GM10248 (cell line): ENCODE measurements at regions of chr1 and their contacts with region 1.

Region 1: GRCh38 chr1:226121587-226122400 is 59.3 kb downstream of the H3-3A start:
- DNase-seq: peak; percentile 88
- CTCF ChIP-seq: peak; percentile 87

Region 2: DNA sequence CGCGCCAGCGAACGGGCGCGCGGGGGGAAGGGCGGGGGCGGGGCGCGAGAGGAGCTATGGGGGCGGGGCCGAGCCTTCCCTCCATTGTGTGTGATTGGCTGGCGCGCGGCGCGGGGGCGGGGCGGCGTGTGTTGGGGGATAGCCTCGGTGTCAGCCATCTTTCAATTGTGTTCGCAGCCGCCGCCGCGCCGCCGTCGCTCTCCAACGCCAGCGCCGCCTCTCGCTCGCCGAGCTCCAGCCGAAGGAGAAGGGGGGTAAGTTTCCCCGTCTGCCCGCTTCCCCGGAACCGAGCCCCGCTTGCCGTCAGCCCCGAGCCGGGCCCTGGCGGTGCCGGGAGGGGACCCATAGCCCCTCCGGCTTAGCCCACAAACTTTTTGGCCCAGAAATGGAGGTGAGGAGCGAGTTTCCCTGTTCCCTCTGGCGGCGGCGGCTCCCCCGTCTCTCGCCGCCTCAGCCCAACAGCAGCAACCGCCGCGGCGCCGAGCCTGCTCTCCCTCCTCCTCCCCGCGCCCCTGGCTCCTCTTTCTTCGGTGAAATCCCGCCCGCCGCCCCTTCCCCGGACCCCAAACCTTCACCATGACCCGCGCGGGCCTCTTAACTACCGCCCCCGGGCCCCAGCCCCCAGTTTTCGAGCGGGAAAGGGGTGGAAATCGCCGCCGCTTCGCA is 59.1 kb before region 1 on chr1 and contains the start of gene H3-3A:
- CTCF ChIA-PET with region 1: interaction called, 36 read pairs
- POLR2A ChIA-PET with region 1: interaction called, 5 read pairs
- DNase-seq: peak; percentile 97
- CTCF ChIP-seq: no peak

Region 3: GRCh38 chr1:226109829-226110248 is 12.0 kb before region 1 on chr1:
- CTCF ChIA-PET with region 1: interaction called, 78 read pairs
- POLR2A ChIA-PET with region 1: no interaction called
- DNase-seq: peak; percentile 96
- CTCF ChIP-seq: no peak

Region 4: GRCh38 chr1:226158457-226158856 is 36.7 kb after region 1 on chr1:
- CTCF ChIA-PET with region 1: interaction called, 40 read pairs
- POLR2A ChIA-PET with region 1: no interaction called
- DNase-seq: no peak
- CTCF ChIP-seq: no peak

Region 5: DNA sequence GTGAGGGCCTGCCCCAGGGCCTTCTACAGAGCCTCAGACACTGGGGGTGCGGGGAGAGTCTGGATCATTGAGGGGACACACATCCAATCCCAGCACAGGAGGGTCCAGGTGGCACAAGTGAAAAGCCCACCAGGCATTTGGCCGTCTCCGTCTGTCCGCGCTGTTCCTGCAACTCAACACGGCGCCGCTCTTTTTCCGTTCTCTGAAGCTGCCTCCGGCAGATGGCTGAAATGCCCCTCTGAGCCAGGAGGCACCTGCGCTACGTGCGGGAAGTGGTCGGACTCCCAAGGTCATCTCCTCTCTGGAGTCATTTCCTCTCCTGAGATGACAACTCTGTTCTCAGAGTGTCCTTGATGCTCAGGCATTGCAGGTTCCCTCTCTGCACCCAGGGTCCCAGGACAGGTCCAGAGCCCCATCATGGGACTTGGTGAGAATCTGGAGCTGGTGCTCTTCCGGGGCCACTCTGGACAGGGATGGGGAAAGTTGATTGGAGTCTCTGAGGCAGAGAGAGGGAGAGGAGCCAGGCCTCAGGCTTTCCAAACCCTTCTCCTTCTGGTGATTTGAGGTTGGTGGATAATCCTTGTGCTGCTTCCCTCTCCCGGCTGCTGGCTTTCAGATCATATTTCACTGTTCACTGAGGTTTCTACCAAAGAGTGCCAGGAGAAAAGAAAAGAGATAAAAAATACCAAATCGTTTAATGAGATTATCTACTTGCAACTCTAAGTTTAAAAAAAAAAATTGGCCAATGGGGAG is 87.7 kb after region 1 on chr1:
- CTCF ChIA-PET with region 1: interaction called, 11 read pairs
- POLR2A ChIA-PET with region 1: no interaction called
- DNase-seq: no peak
- CTCF ChIP-seq: no peak